ENCODE measurements at regions of chr11 and their contacts with region 1.

Region 1: DNA sequence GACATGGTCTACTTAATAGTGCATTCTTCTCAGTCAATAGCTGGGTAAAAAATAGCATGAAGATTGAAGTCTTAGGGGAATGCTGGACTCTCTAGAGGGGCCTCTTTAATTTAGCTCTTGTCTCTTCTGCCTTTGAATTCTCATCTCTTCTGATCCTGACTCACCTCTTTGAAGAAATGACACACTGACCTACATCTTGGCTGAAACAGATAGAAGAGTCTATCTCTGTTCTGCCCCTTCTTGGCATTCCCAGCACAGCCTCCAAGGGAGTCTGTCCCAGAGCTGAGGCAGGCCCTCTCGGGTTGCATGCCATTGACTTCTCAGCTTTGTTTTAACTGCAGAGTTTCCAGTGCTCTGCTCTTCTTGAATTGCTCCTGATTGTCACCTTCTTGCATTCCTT is 55.7 kb downstream of the PTPRJ start:
- DNase-seq: peak; percentile 34

Region 2: GRCh38 chr11:47565340-47566148 is 470.5 kb before region 1 on chr11 and contains the start of gene PTPMT1:
- intact Hi-C with region 1: no loop called
- DNase-seq: peak; percentile 93
- total RNA-seq, gene PTPMT1: 28.9 to 29.2 TPM

Region 3: DNA sequence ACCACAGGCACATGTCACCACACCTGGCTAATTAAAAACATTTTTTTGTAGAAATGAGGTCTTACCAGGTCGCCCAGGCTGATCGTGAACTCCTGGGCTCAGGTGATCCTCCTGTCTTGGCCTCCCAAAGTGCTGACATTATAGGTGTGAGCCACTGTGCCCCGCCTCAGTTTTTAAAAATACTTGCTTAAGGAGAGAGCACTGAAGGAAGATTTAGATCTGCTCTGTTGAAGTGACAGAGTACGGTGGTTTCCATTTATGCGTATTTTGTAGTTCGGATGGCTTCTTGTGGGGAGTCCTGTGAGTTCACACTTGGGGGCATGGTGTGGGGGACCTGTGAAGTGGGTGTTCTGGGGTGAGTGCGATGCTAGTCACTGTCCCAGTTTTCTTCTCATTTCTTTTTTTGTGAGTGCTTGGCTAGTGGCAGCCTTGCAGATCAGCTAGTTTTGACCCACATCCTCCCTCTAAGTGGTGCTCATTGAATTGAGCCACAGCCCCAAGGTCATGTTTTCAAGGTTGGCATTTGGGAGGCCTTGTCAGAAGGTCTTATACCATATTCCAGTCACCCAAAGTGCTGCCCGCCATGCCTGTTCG is 24.1 kb before region 1 on chr11:
- intact Hi-C with region 1: loop called in 1 of 2 experiments (anchors 1 kb)
- DNase-seq: peak; percentile 2

Region 4: GRCh38 chr11:48538991-48539390 is 503.0 kb after region 1 on chr11:
- intact Hi-C with region 1: no loop called
- DNase-seq: no peak